Cardiac septum (tissue), 1 donor: ENCODE measurements at regions of chr9 and their contacts with region 1.

Region 1: DNA sequence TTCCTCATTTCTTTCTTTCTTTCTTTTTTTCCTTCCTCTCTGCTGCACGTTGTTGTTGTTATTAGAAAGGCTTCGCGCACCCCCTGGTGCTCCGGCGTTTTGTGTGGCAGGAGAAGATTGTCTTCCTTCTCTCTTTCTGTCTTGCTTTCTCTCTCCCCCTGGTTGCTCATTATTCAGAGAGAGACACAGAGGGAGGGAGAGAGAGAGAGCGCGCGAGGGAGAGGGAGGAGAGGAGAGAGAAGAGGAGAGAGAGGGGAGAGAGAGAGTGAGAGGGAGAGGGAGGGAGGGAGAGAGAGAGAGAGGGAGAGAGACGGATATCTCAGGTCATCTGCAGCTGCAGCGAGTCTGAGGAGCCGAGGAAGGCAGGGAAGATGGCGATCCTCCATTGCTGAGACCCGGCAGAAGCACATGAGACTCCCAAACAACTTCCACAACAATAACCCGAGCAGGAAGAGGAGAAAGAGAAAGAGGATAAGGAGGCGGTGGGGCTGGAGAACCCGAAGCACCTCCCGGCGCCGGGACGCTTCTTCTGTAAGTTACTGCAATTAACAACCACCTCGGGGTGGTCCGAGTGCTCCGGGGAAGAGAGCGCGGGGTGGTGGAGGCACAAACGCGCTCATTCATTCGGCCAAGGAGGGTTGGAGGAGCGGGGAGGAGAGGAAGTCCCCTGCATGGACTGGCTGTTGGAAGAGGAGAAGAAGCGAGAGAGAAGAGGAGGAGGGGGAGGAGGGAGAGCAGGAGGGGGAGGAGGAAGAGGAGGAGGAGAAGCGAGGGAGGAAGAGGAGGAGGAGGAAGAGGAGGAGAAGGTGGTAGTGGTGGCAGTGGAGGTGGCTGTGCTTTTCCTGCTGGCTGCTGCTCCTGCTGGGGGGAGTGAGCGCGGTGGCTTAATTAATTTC is at the start of gene ZNF462:
- DNase-seq: no peak
- total RNA-seq, gene ZNF462: 38.8 TPM

Region 2: DNA sequence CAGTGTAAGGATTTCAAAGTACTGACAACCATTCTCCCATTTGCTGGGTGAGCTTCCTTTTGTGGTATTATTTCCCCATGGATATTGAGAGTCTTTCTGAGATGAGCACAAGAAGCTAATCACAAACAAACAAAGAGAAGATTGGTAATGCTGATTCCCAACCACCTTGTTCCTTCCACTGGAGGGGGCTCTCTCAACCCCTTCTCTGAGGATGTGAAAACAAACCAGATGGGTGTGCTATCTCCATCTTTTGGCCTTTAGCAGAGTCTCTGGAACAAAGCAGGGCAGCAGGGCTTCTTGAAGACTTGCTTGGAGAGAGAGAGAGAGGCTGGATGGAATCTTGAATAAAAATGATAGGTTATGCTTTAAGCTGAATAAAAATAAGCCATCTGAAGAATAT is 576.8 kb before region 1 on chr9:
- intact Hi-C with region 1: loop called (anchors 10 kb)
- DNase-seq: no peak

Region 3: GRCh38 chr9:106708475-106709146 is 154.5 kb before region 1 on chr9:
- intact Hi-C with region 1: loop called (anchors 5 kb)
- DNase-seq: no peak

Region 4: GRCh38 chr9:106921341-106921899 is 58.3 kb after region 1 on chr9:
- intact Hi-C with region 1: loop called (anchors 1 kb)
- DNase-seq: no peak

Region 5: GRCh38 chr9:106962615-106963363 is 99.7 kb after region 1 on chr9:
- intact Hi-C with region 1: loop called (anchors 5 kb)
- DNase-seq: no peak